Mammary epithelial cell (primary cell): ENCODE measurements at regions of chr18 and their contacts with region 1.

Region 1: DNA sequence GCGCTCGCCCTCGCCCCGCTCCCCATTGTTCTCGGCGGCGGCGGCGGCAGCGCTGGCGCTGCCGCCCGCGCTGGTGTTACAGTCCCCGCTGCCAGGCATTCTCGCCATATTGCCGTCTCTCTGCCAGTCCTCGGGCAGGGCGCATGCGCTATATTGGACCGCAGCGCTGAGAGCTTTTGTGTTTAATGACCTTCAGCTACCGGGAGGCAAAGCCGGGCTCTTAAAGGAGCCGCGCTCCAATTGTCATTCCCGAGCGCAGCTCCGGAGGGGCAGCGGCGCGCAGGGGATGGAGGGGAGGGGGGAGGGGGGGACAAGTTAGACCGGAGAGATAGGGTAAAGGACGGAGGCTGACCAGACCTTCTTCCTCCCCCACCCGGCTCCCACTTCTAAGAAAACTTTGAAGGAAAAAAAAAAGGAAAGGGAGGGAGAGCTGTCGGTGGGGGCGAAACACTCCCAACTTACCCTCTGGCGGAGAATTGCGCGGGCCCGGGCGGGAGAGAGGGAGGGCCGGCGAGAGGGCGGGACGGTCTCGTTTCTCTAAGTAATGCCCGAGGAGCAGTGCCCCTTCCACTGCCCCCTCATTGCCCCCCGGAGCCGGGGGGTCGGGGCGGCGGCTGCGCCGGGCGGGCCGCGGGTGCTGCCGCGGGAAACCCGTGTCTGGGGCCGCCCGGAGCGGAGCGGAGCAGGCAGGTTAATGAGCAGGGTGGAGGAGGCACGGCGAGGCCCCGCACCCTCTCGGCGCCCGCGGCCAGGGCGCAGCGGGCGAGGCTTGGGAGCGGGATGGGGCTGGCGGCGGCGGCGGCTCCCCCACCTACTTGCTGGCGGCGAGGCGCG is at the start of gene KCTD1:
- DNase-seq: peak; percentile 81
- H3K4me3 ChIP-seq: peak within 1 kb of the TSS; percentile 74 to 95 (median 89)
- H3K27ac ChIP-seq: peak within 1 kb of the TSS; percentile 80
- H3K4me1 ChIP-seq: peaks cover 25% of the 10 kb centered on the region
- H3K27me3 ChIP-seq: no peaks in the 10 kb centered on the region
- CTCF ChIP-seq: no peak
- total RNA-seq, gene KCTD1: 35.3 to 64.6 TPM

Region 2: GRCh38 chr18:26307189-26307773 is 241.4 kb before region 1 on chr18:
- CTCF ChIA-PET with region 1: no interaction called
- dilution Hi-C with region 1: no loop called
- in situ Hi-C with region 1: no loop called
- intact Hi-C with region 1: loop called (anchors 2 kb)
- DNase-seq: peak; percentile 45
- H3K4me3 ChIP-seq: no peak overlapping the region
- H3K27ac ChIP-seq: no peak overlapping the region
- H3K4me1 ChIP-seq: peaks cover 4% of the 10 kb centered on the region
- H3K27me3 ChIP-seq: no peaks in the 10 kb centered on the region
- CTCF ChIP-seq: peak; percentile 66 to 76

Region 3: DNA sequence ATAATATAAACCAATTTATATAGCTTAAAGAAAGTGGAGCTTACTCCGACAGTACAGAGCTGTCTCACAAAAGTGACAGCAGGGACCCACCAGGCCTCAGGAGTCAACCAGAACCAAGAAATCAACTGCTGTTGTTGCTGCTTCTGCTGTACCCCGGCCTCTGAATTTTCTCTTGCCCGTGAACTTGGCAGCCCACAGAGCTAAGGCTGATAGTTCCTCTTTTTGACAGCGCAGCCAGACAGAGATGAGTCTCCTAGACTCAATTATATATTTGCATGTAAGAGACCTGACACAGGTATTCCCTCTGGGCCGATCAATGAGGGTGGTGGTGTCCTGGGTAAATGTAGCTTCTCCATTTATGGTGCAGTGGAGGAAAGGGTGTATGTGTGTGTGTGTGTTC is 109.7 kb before region 1 on chr18:
- CTCF ChIA-PET with region 1: no interaction called
- dilution Hi-C with region 1: no loop called
- in situ Hi-C with region 1: no loop called
- intact Hi-C with region 1: loop called (anchors 2 kb)
- DNase-seq: no peak
- H3K4me3 ChIP-seq: no peak overlapping the region
- H3K27ac ChIP-seq: no peak overlapping the region
- H3K4me1 ChIP-seq: peaks cover 43% of the 10 kb centered on the region
- H3K27me3 ChIP-seq: no peaks in the 10 kb centered on the region
- CTCF ChIP-seq: no peak

Region 4: DNA sequence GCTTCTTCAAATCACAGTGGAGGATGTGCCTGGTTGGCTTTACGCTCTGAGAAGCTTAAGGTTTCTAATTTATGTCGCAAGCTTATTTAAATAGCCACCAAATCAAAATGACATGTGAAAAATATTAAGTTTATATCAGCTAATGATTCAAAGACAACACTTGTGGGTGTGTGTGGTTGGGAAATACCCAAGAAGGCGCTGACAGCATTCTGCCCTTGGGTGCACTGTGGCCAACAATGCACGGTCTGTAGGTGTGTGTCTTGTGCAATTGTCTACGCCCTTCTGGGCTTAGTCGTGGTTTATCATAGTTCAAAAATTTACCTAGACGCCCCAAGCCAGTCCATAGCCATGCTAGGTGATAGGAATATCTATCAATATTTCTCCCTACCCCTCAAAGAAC is 61.2 kb before region 1 on chr18:
- CTCF ChIA-PET with region 1: interaction called, 6 read pairs
- dilution Hi-C with region 1: loop called (anchors 5 kb)
- in situ Hi-C with region 1: loop called in 1 of 2 experiments (anchors 10 kb)
- intact Hi-C with region 1: no loop called
- DNase-seq: peak; percentile 96
- H3K4me3 ChIP-seq: no peak overlapping the region
- H3K27ac ChIP-seq: peak overlapping the region; percentile 98
- H3K4me1 ChIP-seq: peaks cover 67% of the 10 kb centered on the region
- H3K27me3 ChIP-seq: no peaks in the 10 kb centered on the region
- CTCF ChIP-seq: no peak

Region 5: GRCh38 chr18:26648509-26649192 is 100.0 kb after region 1 on chr18:
- CTCF ChIA-PET with region 1: interaction called, 5 read pairs
- dilution Hi-C with region 1: no loop called
- in situ Hi-C with region 1: no loop called
- intact Hi-C with region 1: loop called (anchors 1 kb)
- DNase-seq: no peak
- H3K4me3 ChIP-seq: no peak overlapping the region
- H3K27ac ChIP-seq: no peak overlapping the region
- H3K4me1 ChIP-seq: no peaks in the 10 kb centered on the region
- H3K27me3 ChIP-seq: no peaks in the 10 kb centered on the region
- CTCF ChIP-seq: no peak

Region 6: GRCh38 chr18:26926066-26926675 is 377.5 kb after region 1 on chr18:
- CTCF ChIA-PET with region 1: interaction called, 16 read pairs
- dilution Hi-C with region 1: no loop called
- in situ Hi-C with region 1: no loop called
- intact Hi-C with region 1: no loop called
- DNase-seq: no peak
- H3K4me3 ChIP-seq: no peak overlapping the region
- H3K27ac ChIP-seq: no peak overlapping the region
- H3K4me1 ChIP-seq: no peaks in the 10 kb centered on the region
- H3K27me3 ChIP-seq: no peaks in the 10 kb centered on the region
- CTCF ChIP-seq: no peak

Region 7: DNA sequence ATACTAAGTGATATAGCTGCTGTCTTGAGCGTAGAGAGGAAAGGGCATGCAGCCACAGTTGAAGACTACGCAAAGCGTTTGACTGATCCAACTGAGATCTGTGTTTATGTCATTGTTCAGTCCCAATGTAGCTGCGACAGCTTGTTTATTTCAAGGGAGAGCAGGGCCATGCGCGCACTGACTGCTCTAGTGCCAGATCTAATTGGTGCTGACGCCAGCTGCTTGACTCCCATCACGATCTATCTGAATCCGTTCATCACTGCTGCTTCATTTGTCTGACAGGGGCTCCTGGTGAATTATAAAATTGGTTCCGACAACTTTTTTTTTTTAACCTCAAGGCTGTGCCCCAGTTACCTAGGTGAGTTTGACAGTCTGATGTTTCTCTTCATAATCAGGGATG is 560.8 kb after region 1 on chr18:
- CTCF ChIA-PET with region 1: no interaction called
- dilution Hi-C with region 1: no loop called
- in situ Hi-C with region 1: no loop called
- intact Hi-C with region 1: no loop called
- DNase-seq: no peak
- H3K4me3 ChIP-seq: no peak overlapping the region
- H3K27ac ChIP-seq: no peak overlapping the region
- H3K4me1 ChIP-seq: no peaks in the 10 kb centered on the region
- H3K27me3 ChIP-seq: no peaks in the 10 kb centered on the region
- CTCF ChIP-seq: no peak